ENCODE measurements at regions of chr2 and their contacts with region 1.

Region 1: GRCh38 chr2:9594366-9595054 is 36.3 kb downstream of the YWHAQ start:
- DNase-seq: no peak
- H3K4me3 Mint-ChIP-seq: peak overlapping the region; percentile 42
- H3K27ac Mint-ChIP-seq: peak overlapping the region; percentile 93
- H3K4me1 Mint-ChIP-seq: peaks cover 57% of the 10 kb centered on the region
- H3K27me3 Mint-ChIP-seq: no peaks in the 10 kb centered on the region

Region 2: GRCh38 chr2:9613291-9613690 is 18.8 kb after region 1 on chr2:
- intact Hi-C with region 1: loop called (anchors 1 kb)
- DNase-seq: no peak
- H3K4me3 Mint-ChIP-seq: no peak overlapping the region
- H3K27ac Mint-ChIP-seq: no peak overlapping the region
- H3K4me1 Mint-ChIP-seq: peaks cover 78% of the 10 kb centered on the region
- H3K27me3 Mint-ChIP-seq: no peaks in the 10 kb centered on the region

Region 3: GRCh38 chr2:9782197-9782719 is 187.7 kb after region 1 on chr2:
- intact Hi-C with region 1: loop called (anchors 1 kb)
- DNase-seq: peak; percentile 82
- H3K4me3 Mint-ChIP-seq: peak overlapping the region; percentile 66
- H3K27ac Mint-ChIP-seq: peak overlapping the region; percentile 99
- H3K4me1 Mint-ChIP-seq: peaks cover 67% of the 10 kb centered on the region
- H3K27me3 Mint-ChIP-seq: no peaks in the 10 kb centered on the region

Region 4: GRCh38 chr2:9897331-9897737 is 302.8 kb after region 1 on chr2:
- intact Hi-C with region 1: no loop called
- DNase-seq: no peak
- H3K4me3 Mint-ChIP-seq: no peak overlapping the region
- H3K27ac Mint-ChIP-seq: peak overlapping the region; percentile 48
- H3K4me1 Mint-ChIP-seq: peaks cover 25% of the 10 kb centered on the region
- H3K27me3 Mint-ChIP-seq: no peaks in the 10 kb centered on the region